Prostate gland (tissue), 2 donors: ENCODE measurements at regions of chr19 and their contacts with region 1.

Region 1: DNA sequence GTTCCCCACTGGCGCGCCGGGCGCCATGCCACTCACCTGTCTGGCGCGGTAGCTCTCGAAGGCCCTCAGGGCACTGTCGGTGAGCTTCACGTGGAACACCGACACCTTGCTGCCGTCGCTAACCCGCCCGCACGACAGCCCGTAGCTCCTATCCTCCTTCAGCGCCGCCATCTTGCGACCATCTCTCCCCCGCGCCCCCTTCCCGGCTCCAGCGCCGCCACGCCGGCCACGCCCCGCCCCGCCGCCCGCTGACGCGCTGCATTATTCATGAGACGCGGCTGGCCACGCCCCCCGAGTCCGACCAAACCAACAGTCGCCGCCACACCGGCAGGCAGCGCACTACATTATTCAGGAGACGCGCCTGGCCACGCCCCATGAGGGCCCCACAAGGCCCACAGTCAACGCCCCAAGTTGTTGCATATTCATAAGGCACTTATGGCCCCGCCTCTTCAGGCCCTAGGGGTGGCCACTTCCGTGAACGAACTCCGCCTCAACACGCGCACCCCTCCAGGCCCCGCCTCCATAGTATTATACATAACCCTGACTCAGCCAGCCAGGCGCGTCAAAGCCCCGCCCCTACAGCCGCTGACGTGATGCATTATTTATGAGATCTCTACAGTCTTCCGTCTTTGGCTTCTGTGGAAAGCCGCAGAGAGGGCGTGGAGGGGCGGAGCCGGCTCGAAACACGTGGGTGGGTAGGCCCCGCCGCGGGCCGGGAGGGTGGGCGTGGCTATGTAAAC is at the start of gene ELL:
- DNase-seq: peak; percentile 100
- H3K4me3 ChIP-seq: peak within 1 kb of the TSS; percentile 82 to 93
- H3K27ac ChIP-seq: peak within 1 kb of the TSS; percentile 93 to 94
- H3K4me1 ChIP-seq: no peaks in the 10 kb centered on the region
- H3K27me3 ChIP-seq: no peaks in the 10 kb centered on the region
- CTCF ChIP-seq: peak in 3 of 4 experiments; percentile 19 to 54 (median 19)
- POLR2A ChIP-seq: peak; percentile 98
- total RNA-seq, gene ELL: 10.7 to 44.4 TPM

Region 2: DNA sequence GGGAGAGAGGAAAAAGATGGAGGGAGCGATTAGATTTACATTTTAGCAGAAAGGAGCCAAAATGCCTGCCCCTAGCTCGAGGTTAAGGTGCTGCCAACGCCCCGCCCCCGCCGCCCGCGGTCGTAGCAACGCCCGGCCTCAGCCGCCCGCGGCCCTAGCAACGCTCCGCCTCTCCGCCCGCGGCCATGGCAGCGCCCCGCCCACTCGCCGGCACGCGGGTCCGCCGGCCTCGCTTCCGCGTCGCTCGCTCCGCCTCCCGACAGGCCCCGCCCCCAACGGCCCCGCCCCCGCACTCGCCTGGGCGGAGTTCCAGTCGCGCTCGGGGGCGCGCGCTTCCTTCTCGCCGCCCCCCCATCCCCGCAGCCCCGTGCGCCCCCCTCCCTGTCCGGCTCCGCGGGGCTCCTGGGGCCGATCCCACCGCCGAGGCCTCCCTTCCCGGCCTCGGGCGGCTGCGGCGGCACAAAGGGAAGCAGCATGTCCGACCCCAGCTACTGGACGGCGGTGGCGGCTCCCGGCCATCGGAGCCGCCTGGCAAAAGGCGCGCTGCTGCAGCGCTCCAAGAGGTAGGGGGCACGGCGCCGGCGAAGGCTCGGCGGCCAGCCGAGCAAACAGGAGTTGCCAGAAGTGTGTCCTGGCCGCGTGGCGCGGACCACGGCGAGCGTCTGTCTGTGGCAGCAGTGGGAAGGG is 404.2 kb before region 1 on chr19:
- intact Hi-C with region 1: no loop called
- DNase-seq: peak; percentile 75
- H3K4me3 ChIP-seq: peak overlapping the region; percentile 70
- H3K27ac ChIP-seq: peak overlapping the region; percentile 75 to 80
- H3K4me1 ChIP-seq: peaks cover 6% of the 10 kb centered on the region
- H3K27me3 ChIP-seq: no peaks in the 10 kb centered on the region
- CTCF ChIP-seq: peak in 2 of 4 experiments; percentile 12
- POLR2A ChIP-seq: no peak

Region 3: GRCh38 chr19:18456974-18457373 is 65.1 kb before region 1 on chr19:
- intact Hi-C with region 1: loop called (anchors 5 kb)
- DNase-seq: no peak
- H3K4me3 ChIP-seq: no peak overlapping the region
- H3K27ac ChIP-seq: no peak overlapping the region
- H3K4me1 ChIP-seq: peaks cover 9% of the 10 kb centered on the region
- H3K27me3 ChIP-seq: no peaks in the 10 kb centered on the region
- CTCF ChIP-seq: no peak
- POLR2A ChIP-seq: no peak

Region 4: GRCh38 chr19:18557474-18558201 is 35.6 kb after region 1 on chr19 and contains the start of gene KXD1:
- intact Hi-C with region 1: loop called (anchors 5 kb)
- DNase-seq: peak; percentile 96
- H3K4me3 ChIP-seq: peak within 1 kb of the TSS; percentile 59 to 87
- H3K27ac ChIP-seq: peak within 1 kb of the TSS; percentile 87
- H3K4me1 ChIP-seq: peaks cover 7% of the 10 kb centered on the region
- H3K27me3 ChIP-seq: no peaks in the 10 kb centered on the region
- CTCF ChIP-seq: no peak
- POLR2A ChIP-seq: peak; percentile 84
- total RNA-seq, gene KXD1: 115 to 130 TPM

Region 5: GRCh38 chr19:18771328-18772242 is 249.5 kb after region 1 on chr19:
- intact Hi-C with region 1: no loop called
- DNase-seq: no peak
- H3K4me3 ChIP-seq: no peak overlapping the region
- H3K27ac ChIP-seq: no peak overlapping the region
- H3K4me1 ChIP-seq: peaks cover 5% of the 10 kb centered on the region
- H3K27me3 ChIP-seq: no peaks in the 10 kb centered on the region
- CTCF ChIP-seq: no peak
- POLR2A ChIP-seq: no peak